Posterior vena cava (tissue), 2 donors: ENCODE measurements at regions of chr3 and their contacts with region 1.

Region 1: DNA sequence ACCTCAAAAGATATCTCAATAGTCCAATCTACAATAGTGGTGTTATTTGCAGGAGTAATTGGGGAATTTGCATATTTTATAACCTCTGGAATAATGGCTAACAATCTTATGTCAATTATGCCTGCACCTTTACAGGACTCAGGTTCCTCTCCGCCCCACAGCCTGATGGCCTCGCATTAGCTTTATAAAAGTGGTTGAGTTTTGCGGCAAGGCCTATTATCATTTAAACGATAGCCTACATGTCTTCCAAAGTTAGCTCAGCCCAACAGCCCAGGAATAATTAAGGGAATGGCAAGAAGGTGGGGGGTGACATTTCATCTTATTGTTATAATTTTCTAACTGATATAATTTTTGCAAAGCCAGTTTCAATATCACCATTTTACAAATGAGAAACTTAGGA is 97.3 kb downstream of the RTP4 start:
- DNase-seq: no peak

Region 2: GRCh38 chr3:187369089-187369447 is 96.4 kb before region 1 on chr3:
- intact Hi-C with region 1: no loop called
- DNase-seq: no peak

Region 3: GRCh38 chr3:187450431-187451190 is 14.9 kb before region 1 on chr3:
- intact Hi-C with region 1: no loop called
- DNase-seq: no peak

Region 4: GRCh38 chr3:187484547-187485295 is 19.2 kb after region 1 on chr3:
- intact Hi-C with region 1: loop called in 1 of 2 experiments (anchors 1 kb)
- DNase-seq: no peak

Region 5: DNA sequence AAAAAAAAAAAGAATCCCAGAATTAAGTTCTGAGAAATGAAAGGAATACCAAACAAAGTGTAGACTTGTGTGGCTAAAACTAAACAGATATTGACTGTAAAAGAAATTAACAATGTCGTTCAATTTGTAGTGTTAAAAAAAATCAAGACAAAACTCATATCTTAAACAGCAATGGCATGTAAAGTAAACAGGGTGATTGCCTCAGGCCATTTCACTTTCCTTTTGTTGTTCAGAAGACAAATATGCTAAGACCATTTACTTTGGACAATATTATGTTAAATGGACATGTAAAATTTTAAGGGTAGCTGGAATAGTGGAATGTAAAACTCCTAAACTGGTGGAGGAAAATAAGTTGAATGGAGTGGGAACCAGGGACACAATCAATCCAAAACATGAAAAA is 41.8 kb after region 1 on chr3:
- intact Hi-C with region 1: no loop called
- DNase-seq: no peak